H1 (cell line): ENCODE measurements at regions of chr1 and their contacts with region 1.

Region 1: GRCh38 chr1:150332651-150333290 is 11.4 kb downstream of the PRPF3 start:
- DNase-seq: no peak
- H3K4me3 ChIP-seq: no peak overlapping the region
- H3K27ac ChIP-seq: no peak overlapping the region
- H3K4me1 ChIP-seq: no peaks in the 10 kb centered on the region
- H3K27me3 ChIP-seq: no peaks in the 10 kb centered on the region
- CTCF ChIP-seq: no peak
- EP300 ChIP-seq: no peak
- POLR2A ChIP-seq: no peak
- RAD21 ChIP-seq: no peak

Region 2: GRCh38 chr1:150235852-150236613 is 96.7 kb before region 1 on chr1 and contains the start of gene ANP32E:
- CTCF ChIA-PET with region 1: no interaction called
- POLR2A ChIA-PET with region 1: no interaction called
- DNase-seq: peak; percentile 88 to 94
- H3K4me3 ChIP-seq: peak within 1 kb of the TSS; percentile 84 to 99 (median 98)
- H3K27ac ChIP-seq: peak within 1 kb of the TSS; percentile 97
- H3K4me1 ChIP-seq: peaks cover 0 to 6% (median 2%) of the 10 kb centered on the region in 4 experiments; a peak in 5 of 7 replicates
- H3K27me3 ChIP-seq: no peaks in the 10 kb centered on the region
- CTCF ChIP-seq: no peak
- EP300 ChIP-seq: no peak
- POLR2A ChIP-seq: peak; percentile 83 to 91
- RAD21 ChIP-seq: peak in 1 of 2 experiments; percentile 24; a peak in 1 of 4 replicates
- total RNA-seq, gene ANP32E: 114 and 123 TPM in 2 replicates

Region 3: DNA sequence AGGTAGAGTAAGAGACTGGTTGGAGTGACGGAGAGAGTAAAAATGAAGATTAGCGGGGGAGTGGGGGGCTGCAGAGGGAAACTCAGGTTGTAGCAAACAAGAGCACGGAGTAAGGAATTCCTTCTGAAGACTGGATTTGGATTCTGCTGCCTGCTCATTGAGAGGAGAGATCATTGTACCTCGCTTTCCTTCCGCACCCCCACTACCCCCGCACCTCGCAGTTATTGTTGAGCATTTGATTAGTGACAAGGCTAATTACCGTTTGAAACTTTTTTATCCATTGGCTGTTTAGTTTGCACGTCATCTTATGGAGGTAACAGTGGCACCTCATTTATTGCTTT is 11.0 kb before region 1 on chr1:
- CTCF ChIA-PET with region 1: interaction called, 5 read pairs
- POLR2A ChIA-PET with region 1: interaction called, 12 read pairs
- DNase-seq: no peak
- H3K4me3 ChIP-seq: peak overlapping the region; percentile 77 to 100 (median 91)
- H3K27ac ChIP-seq: peak overlapping the region; percentile 71
- H3K4me1 ChIP-seq: peaks cover 0 to 6% (median 1%) of the 10 kb centered on the region in 4 experiments; a peak in 3 of 7 replicates
- H3K27me3 ChIP-seq: no peaks in the 10 kb centered on the region; a peak in 1 of 7 replicates
- CTCF ChIP-seq: no peak
- EP300 ChIP-seq: no peak
- POLR2A ChIP-seq: no peak
- RAD21 ChIP-seq: no peak